ENCODE measurements at regions of chr18 and their contacts with region 1.

Region 1: DNA sequence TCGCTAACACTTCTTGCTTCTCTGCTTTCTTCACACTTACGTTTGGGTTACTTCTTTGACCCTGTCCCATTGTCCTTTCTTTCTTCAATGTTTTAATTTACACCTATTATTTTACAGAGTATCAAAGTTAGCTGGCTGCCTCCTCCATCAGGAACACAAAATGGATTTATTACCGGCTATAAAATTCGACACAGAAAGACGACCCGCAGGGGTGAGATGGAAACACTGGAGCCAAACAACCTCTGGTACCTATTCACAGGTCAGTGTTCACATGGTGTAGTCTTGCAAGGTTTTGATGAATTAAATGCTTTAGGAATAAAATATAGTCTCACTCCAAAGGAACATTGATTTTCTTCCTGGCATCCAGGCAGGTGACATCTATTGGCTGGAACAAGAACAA is 919.0 kb downstream of the MBD2 start:
- DNase-seq: no peak
- ATAC-seq: no peak
- H3K4me3 ChIP-seq: no peak overlapping the region
- H3K27ac ChIP-seq: no peak overlapping the region
- H3K4me1 ChIP-seq: no peaks in the 10 kb centered on the region
- H3K27me3 ChIP-seq: no peaks in the 10 kb centered on the region
- CTCF ChIP-seq: no peak

Region 2: DNA sequence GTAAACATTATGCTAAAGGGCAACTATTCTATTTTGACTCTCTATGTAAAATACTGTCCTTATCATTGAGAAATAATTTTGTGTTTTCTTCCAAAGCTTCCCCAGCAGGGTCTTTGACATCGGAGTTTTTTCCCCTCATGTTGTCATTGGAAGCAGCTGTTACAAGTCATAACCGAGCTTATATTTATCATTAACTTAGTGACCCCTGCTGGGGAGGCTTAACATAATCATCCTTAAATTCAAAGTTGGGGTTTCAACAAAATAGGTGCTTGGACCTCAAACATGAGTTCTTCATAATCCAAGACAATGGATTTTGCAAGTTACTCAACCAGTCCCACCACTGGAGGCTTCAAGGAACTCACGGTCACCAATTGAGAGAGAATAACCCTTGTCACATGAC is 634.6 kb before region 1 on chr18:
- CTCF ChIA-PET with region 1: no interaction called
- POLR2A ChIA-PET with region 1: interaction called, 15 read pairs
- in situ Hi-C with region 1: no loop called
- intact Hi-C with region 1: no loop called
- DNase-seq: no peak
- ATAC-seq: no peak
- H3K4me3 ChIP-seq: no peak overlapping the region
- H3K27ac ChIP-seq: no peak overlapping the region
- H3K4me1 ChIP-seq: no peaks in the 10 kb centered on the region
- H3K27me3 ChIP-seq: no peaks in the 10 kb centered on the region
- CTCF ChIP-seq: no peak; the same call in 1 of the 2 replicates

Region 3: GRCh38 chr18:53115876-53116585 is 189.4 kb before region 1 on chr18:
- CTCF ChIA-PET with region 1: no interaction called
- POLR2A ChIA-PET with region 1: no interaction called
- in situ Hi-C with region 1: no loop called
- intact Hi-C with region 1: no loop called
- DNase-seq: no peak
- ATAC-seq: no peak
- H3K4me3 ChIP-seq: peak overlapping the region; percentile 9 to 19; a peak in 2 of 4 replicates
- H3K27ac ChIP-seq: no peak overlapping the region
- H3K4me1 ChIP-seq: no peaks in the 10 kb centered on the region
- H3K27me3 ChIP-seq: no peaks in the 10 kb centered on the region
- CTCF ChIP-seq: no peak